ENCODE measurements at regions of chr19 and their contacts with region 1.

Region 1: GRCh38 chr19:1189419-1189818 is 15.4 kb upstream of the SBNO2 start:
- DNase-seq: peak; percentile 57
- H3K4me3 Mint-ChIP-seq: no peak overlapping the region
- H3K27ac Mint-ChIP-seq: peak overlapping the region; percentile 71
- H3K4me1 Mint-ChIP-seq: peaks cover 34% of the 10 kb centered on the region
- H3K27me3 Mint-ChIP-seq: no peaks in the 10 kb centered on the region

Region 2: GRCh38 chr19:1064661-1065605 is 124.5 kb before region 1 on chr19:
- CTCF ChIA-PET with region 1: interaction called, 11 read pairs
- POLR2A ChIA-PET with region 1: no interaction called
- DNase-seq: peak; percentile 70
- H3K4me3 Mint-ChIP-seq: peak overlapping the region; percentile 55
- H3K27ac Mint-ChIP-seq: peak overlapping the region; percentile 62
- H3K4me1 Mint-ChIP-seq: peaks cover 39% of the 10 kb centered on the region
- H3K27me3 Mint-ChIP-seq: no peaks in the 10 kb centered on the region

Region 3: DNA sequence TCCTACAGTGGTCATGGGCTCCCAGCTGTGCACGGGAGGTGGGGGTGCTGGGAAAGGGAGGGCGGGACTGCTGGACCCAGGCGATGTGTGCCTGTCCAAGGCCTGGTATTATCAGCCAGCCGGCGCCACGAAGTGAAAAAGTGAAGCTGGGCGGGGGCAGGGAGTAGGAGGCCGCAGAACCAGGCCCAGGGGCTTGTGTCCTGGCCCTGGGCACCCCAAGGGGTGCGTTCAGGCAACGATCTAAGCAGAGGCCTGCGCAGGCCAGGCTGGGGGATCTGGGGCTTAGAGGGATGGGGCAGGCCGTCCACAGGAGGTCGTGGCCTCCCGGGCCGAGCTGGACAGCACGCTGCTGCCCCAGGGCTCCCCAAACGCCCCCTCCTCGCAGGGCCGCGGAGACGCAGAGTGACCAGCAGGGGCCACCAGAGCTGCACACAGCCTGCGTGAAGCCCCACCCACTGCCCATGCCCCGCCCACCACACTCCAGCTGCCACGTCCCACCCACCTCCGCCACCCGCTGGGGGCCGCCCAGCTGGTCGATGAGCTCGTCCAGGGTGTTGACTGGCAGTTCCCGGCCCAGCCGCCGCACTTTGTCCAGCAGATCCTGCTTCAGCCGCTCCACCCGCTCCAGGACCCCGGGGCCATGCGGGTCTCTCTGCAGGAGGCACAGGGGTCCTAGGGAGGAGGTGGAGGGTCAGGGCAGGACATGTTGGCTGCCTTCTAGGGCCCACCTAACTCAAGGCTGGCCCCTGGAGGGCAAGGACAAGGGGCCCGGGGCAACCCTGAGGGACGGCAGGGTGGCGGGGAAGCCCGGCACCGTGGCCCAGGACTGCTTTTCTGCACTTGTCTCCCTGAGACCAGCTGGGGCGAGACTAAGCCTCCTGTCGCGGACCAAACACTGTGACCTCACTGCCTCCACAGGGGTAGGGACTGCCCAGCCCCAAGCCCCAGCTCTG is 76.1 kb before region 1 on chr19:
- CTCF ChIA-PET with region 1: interaction called, 15 read pairs
- POLR2A ChIA-PET with region 1: no interaction called
- DNase-seq: peak; percentile 87
- H3K4me3 Mint-ChIP-seq: no peak overlapping the region
- H3K27ac Mint-ChIP-seq: no peak overlapping the region
- H3K4me1 Mint-ChIP-seq: peaks cover 3% of the 10 kb centered on the region
- H3K27me3 Mint-ChIP-seq: no peaks in the 10 kb centered on the region

Region 4: DNA sequence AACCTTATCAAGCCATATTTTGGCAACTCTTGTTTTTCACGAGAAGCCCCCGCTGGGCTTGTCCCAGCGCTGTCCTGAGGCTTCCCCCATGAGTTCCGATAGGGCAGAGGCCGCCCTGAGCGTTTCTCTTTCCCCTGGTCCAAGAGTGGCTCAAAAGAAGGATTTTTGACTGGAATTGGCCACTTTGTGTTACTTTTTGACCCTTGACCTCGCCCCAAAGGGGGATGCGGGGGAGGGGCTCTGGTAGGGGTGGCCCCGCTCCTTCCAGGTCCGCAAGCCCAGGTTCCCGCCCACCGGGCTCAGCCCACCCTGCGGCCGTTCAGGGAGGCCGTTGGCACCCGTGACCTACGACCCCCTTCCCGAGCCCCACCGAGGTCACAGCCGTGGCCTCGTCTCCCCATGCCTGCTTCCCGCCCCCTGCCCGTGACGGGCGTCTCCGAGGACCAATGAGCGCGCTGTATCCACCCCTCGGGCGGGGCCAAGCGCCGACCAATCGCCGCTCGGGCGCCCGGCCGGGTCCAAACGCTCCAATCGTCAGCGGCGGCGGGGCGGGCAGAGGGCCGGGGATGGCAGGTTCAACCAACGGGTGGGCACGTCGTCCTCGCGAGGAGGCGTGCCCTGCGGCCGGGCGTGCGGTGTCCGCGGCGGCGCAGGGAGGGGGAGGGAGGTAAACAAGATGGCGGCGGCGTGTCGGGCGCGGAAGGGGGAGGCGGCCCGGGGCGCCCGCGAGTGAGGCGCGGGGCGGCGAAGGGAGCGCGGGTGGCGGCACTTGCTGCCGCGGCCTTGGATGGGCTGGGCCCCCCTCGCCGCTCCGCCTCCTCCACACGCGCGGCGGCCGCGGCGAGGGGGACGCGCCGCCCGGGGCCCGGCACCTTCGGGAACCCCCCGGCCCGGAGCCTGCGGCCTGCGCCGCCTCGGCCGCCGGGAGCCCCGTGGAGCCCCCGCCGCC is 16.0 kb after region 1 on chr19 and contains the start of gene STK11:
- CTCF ChIA-PET with region 1: interaction called, 14 read pairs
- POLR2A ChIA-PET with region 1: no interaction called
- DNase-seq: peak; percentile 99
- H3K4me3 Mint-ChIP-seq: peak within 1 kb of the TSS; percentile 97
- H3K27ac Mint-ChIP-seq: peak within 1 kb of the TSS; percentile 89
- H3K4me1 Mint-ChIP-seq: peaks cover 30% of the 10 kb centered on the region
- H3K27me3 Mint-ChIP-seq: no peaks in the 10 kb centered on the region
- total RNA-seq, gene STK11: 71.7 to 82.0 TPM

Region 5: GRCh38 chr19:1336079-1336684 is 146.8 kb after region 1 on chr19:
- CTCF ChIA-PET with region 1: no interaction called
- POLR2A ChIA-PET with region 1: no interaction called
- DNase-seq: no peak
- H3K4me3 Mint-ChIP-seq: no peak overlapping the region
- H3K27ac Mint-ChIP-seq: no peak overlapping the region
- H3K4me1 Mint-ChIP-seq: no peaks in the 10 kb centered on the region
- H3K27me3 Mint-ChIP-seq: no peaks in the 10 kb centered on the region